Mammary epithelial cell (primary cell): ENCODE measurements at regions of chr7 and their contacts with region 1.

Region 1: GRCh38 chr7:140062528-140063299 is at the start of gene PARP12:
- DNase-seq: peak; percentile 76
- H3K4me3 ChIP-seq: peak within 1 kb of the TSS; percentile 48 to 68 (median 61)
- H3K27ac ChIP-seq: peak within 1 kb of the TSS; percentile 28
- H3K4me1 ChIP-seq: peaks cover 23% of the 10 kb centered on the region
- H3K27me3 ChIP-seq: no peaks in the 10 kb centered on the region
- CTCF ChIP-seq: no peak
- total RNA-seq, gene PARP12: 16.0 to 19.3 TPM

Region 2: GRCh38 chr7:140035400-140036223 is 27.1 kb before region 1 on chr7:
- CTCF ChIA-PET with region 1: no interaction called
- dilution Hi-C with region 1: no loop called
- in situ Hi-C with region 1: no loop called
- intact Hi-C with region 1: loop called (anchors 1 kb)
- DNase-seq: peak; percentile 70
- H3K4me3 ChIP-seq: no peak overlapping the region
- H3K27ac ChIP-seq: peak overlapping the region; percentile 4
- H3K4me1 ChIP-seq: peaks cover 36% of the 10 kb centered on the region
- H3K27me3 ChIP-seq: no peaks in the 10 kb centered on the region
- CTCF ChIP-seq: no peak

Region 3: GRCh38 chr7:140121326-140121725 is 58.6 kb after region 1 on chr7:
- CTCF ChIA-PET with region 1: no interaction called
- dilution Hi-C with region 1: no loop called
- in situ Hi-C with region 1: no loop called
- intact Hi-C with region 1: no loop called
- DNase-seq: no peak
- H3K4me3 ChIP-seq: no peak overlapping the region
- H3K27ac ChIP-seq: no peak overlapping the region
- H3K4me1 ChIP-seq: no peaks in the 10 kb centered on the region
- H3K27me3 ChIP-seq: no peaks in the 10 kb centered on the region
- CTCF ChIP-seq: no peak

Region 4: GRCh38 chr7:140144821-140145220 is 82.1 kb after region 1 on chr7:
- CTCF ChIA-PET with region 1: no interaction called
- dilution Hi-C with region 1: no loop called
- in situ Hi-C with region 1: no loop called
- intact Hi-C with region 1: no loop called
- DNase-seq: no peak
- H3K4me3 ChIP-seq: no peak overlapping the region
- H3K27ac ChIP-seq: no peak overlapping the region
- H3K4me1 ChIP-seq: no peaks in the 10 kb centered on the region
- H3K27me3 ChIP-seq: no peaks in the 10 kb centered on the region
- CTCF ChIP-seq: no peak

Region 5: GRCh38 chr7:140326116-140326928 is 263.6 kb after region 1 on chr7:
- CTCF ChIA-PET with region 1: no interaction called
- dilution Hi-C with region 1: no loop called
- in situ Hi-C with region 1: no loop called
- intact Hi-C with region 1: loop called (anchors 10 kb)
- DNase-seq: peak; percentile 46
- H3K4me3 ChIP-seq: no peak overlapping the region
- H3K27ac ChIP-seq: no peak overlapping the region
- H3K4me1 ChIP-seq: no peaks in the 10 kb centered on the region
- H3K27me3 ChIP-seq: no peaks in the 10 kb centered on the region
- CTCF ChIP-seq: peak; percentile 58 to 89